ENCODE measurements at regions of chr1 and their contacts with region 1.

Region 1: GRCh38 chr1:202998836-202999750 is 8.1 kb upstream of the TMEM183A start:
- DNase-seq: peak; percentile 85
- ATAC-seq: peak; percentile 49
- H3K4me3 Mint-ChIP-seq: peak overlapping the region; percentile 49
- H3K27ac Mint-ChIP-seq: no peak overlapping the region
- H3K4me1 Mint-ChIP-seq: peaks cover 8% of the 10 kb centered on the region
- H3K27me3 Mint-ChIP-seq: peaks cover 25% of the 10 kb centered on the region
- CTCF ChIP-seq: peak; percentile 86

Region 2: DNA sequence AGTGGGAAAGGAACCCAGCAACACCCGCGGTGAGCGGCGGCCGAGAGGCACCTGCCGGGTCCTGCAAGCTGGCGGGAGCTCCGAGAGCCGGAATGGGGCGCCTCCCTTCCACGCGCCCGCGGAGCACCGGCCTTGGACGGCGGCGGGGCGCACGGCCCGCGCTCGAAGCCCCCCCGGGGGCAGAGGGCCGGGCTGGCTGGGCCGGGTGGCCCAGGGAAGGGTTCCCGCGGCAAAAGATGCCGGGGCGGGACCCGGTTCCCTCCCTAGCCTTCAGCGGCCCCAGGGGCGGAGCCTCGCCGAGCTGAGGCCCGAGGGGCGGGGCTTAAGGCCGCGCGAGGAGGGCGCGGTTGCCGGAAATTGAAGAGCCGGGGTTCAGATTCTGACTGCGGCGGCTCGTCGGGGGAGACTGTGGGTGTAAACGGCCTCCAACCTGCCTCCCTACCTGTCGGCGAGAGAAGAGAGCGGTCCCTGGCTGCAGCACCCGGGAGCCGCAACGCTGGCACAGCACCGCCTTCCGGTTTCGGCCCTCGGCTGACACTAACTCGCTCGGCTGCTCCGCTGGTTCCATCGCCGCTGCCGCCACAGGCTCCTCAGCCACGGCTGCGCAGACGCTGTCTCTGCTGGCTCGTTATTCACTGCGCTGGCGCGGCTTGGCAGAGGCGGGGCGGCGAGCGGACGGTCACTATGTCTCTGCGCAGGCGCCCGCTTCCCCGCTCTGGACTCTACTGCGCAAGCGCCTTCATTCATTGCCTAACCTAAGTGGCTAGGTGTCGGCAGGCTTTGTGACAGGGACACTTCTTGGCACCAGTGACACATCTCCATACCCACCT is 110.3 kb before region 1 on chr1 and contains the start of gene RABIF:
- CTCF ChIA-PET with region 1: interaction called, 6 read pairs
- POLR2A ChIA-PET with region 1: no interaction called
- intact Hi-C with region 1: loop called (anchors 10 kb)
- DNase-seq: peak; percentile 98
- ATAC-seq: peak; percentile 94
- H3K4me3 Mint-ChIP-seq: peak within 1 kb of the TSS; percentile 86
- H3K27ac Mint-ChIP-seq: peak within 1 kb of the TSS; percentile 93
- H3K4me1 Mint-ChIP-seq: peaks cover 20% of the 10 kb centered on the region
- H3K27me3 Mint-ChIP-seq: no peaks in the 10 kb centered on the region
- CTCF ChIP-seq: no peak
- total RNA-seq, gene RABIF: 7.0 to 7.1 TPM

Region 3: DNA sequence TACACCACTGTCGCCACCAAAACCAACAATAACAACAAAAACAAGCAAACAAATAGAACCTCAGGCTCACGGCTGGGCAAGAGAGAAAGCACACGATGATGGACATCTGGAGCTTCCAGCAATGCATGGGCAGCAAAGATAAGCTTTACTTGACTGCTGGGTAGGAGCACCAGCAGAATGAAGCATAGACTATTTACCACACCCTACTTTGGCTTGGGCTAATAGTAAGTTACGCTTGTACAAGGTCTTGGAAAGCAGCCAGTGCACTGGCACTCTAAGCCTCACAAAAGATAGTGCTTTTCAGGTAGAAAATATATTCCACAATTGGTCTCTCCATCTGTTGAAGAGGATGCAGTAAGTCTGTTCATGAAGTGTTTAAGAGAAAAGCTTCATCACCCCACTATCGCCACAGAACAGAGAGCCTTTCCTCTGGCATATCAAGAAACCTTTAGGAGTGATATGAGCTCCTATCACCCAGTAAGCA is 54.6 kb before region 1 on chr1:
- CTCF ChIA-PET with region 1: interaction called, 19 read pairs
- POLR2A ChIA-PET with region 1: no interaction called
- intact Hi-C with region 1: no loop called
- DNase-seq: no peak
- ATAC-seq: no peak
- H3K4me3 Mint-ChIP-seq: no peak overlapping the region
- H3K27ac Mint-ChIP-seq: no peak overlapping the region
- H3K4me1 Mint-ChIP-seq: no peaks in the 10 kb centered on the region
- H3K27me3 Mint-ChIP-seq: no peaks in the 10 kb centered on the region
- CTCF ChIP-seq: no peak

Region 4: GRCh38 chr1:202968840-202969295 is 30.2 kb before region 1 on chr1:
- CTCF ChIA-PET with region 1: interaction called, 23 read pairs
- POLR2A ChIA-PET with region 1: interaction called, 3 read pairs
- intact Hi-C with region 1: no loop called
- DNase-seq: peak; percentile 56
- ATAC-seq: peak; percentile 56
- H3K4me3 Mint-ChIP-seq: no peak overlapping the region
- H3K27ac Mint-ChIP-seq: peak overlapping the region; percentile 8
- H3K4me1 Mint-ChIP-seq: peaks cover 27% of the 10 kb centered on the region
- H3K27me3 Mint-ChIP-seq: no peaks in the 10 kb centered on the region
- CTCF ChIP-seq: peak; percentile 49

Region 5: DNA sequence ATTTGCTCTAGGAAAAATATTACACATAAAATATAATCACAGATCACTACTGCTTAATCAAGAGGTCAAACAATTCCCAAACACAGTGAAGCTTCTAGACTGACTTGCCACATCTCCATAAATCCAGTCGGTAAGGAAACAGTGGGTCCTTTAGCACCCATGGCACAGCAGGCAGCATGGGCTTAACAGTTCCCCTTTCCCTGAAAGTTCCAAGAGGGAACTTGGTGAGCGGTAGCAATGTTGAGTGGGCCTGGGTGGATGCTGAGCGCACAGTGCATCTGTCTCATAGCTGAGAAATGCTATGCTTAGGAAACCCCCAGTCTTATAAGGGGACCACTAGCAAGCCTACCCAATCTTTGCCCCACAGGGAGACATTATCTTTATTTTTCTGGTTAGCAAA is 24.2 kb before region 1 on chr1:
- CTCF ChIA-PET with region 1: interaction called, 23 read pairs
- POLR2A ChIA-PET with region 1: interaction called, 3 read pairs
- intact Hi-C with region 1: no loop called
- DNase-seq: no peak
- ATAC-seq: no peak
- H3K4me3 Mint-ChIP-seq: no peak overlapping the region
- H3K27ac Mint-ChIP-seq: no peak overlapping the region
- H3K4me1 Mint-ChIP-seq: no peaks in the 10 kb centered on the region
- H3K27me3 Mint-ChIP-seq: peaks cover 18% of the 10 kb centered on the region
- CTCF ChIP-seq: no peak

Region 6: DNA sequence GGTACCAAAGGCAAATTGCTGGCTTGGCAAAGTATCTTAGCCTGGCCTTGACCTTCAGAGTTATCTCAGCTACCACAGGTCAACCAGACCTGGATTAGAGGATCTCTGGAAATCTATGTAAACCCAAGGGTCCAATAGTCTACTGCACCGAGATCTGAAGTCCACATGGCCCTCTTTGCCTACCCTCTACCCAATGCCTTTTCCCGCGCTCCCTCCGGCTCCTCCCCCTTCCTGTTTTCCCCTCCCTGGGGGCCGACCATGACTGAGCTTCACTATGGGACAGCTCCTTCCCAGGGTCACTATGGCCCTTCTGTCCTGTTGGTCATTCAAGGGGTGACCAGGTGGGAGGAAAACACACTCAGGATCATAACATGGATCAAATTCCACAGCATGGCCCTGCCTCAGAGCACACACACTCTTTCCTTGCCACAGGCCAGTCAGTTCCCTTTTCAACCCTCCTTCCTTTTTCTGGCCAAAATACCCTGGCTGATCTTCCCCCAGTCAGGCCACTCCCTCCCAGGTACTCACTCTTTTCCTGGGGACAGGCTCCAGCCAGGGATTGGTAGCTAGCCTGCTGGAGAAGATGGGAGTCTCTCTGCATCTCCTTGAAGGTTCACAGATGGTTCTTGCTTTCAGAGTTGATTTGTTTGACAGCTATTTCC is 11.0 kb before region 1 on chr1:
- CTCF ChIA-PET with region 1: interaction called, 44 read pairs
- POLR2A ChIA-PET with region 1: no interaction called
- intact Hi-C with region 1: no loop called
- DNase-seq: no peak
- ATAC-seq: no peak
- H3K4me3 Mint-ChIP-seq: no peak overlapping the region
- H3K27ac Mint-ChIP-seq: no peak overlapping the region
- H3K4me1 Mint-ChIP-seq: no peaks in the 10 kb centered on the region
- H3K27me3 Mint-ChIP-seq: peaks cover 8% of the 10 kb centered on the region
- CTCF ChIP-seq: no peak

Region 7: DNA sequence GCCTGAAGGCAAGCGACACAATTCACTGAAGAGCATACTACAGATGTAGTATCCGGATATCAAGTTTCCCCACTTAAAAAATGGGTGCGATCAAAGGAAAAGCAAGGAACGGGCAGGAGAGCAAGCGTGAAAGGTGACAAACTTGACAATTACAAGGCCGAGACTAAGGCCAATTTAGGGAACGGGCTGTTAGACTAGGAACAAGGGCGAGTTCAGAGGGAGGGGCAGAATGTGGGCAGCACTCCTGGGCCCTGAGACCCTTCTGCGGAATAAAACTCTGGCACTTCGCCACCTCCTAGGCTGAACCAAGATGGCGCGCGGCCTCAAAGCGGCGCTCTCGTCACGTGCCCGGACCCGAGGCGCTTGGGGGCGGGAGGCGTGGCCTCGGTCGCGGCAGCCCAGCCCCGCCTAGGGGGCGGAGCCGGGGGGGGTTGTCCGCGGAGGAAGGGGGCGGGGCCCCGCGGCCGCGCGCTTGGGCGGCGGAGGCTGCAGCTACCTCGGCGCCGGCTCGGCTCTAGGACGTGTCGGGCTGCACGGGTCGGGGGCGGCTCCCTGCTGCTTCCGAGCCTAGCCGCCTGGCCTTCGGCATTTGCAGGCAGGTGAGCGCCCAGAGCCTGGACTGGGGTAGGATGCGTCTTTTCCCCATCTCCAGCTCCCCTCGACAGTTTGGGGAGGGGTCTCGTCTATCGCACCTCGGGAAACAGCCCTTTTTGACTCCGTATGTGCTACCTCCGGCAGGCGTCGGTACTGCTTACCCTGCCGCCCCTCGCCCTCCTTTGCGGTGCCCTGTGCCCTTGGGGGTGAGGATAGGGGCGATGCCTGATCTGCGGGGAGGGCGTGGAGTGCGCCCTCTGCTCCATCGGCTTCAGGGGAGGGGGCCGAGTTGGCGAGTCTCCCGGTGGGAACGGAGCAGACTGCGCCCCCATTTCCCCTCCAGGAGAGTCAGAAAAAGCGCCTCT is 27.2 kb after region 1 on chr1 and contains the start of gene PPFIA4:
- CTCF ChIA-PET with region 1: interaction called, 12 read pairs
- POLR2A ChIA-PET with region 1: interaction called, 4 read pairs
- intact Hi-C with region 1: no loop called
- DNase-seq: peak; percentile 92
- ATAC-seq: peak; percentile 97
- H3K4me3 Mint-ChIP-seq: peak within 1 kb of the TSS; percentile 89
- H3K27ac Mint-ChIP-seq: peak within 1 kb of the TSS; percentile 82
- H3K4me1 Mint-ChIP-seq: peaks cover 17% of the 10 kb centered on the region
- H3K27me3 Mint-ChIP-seq: peaks cover 10% of the 10 kb centered on the region
- CTCF ChIP-seq: no peak
- total RNA-seq, gene PPFIA4: 78.8 to 79.9 TPM

Measured in activated CD8-positive, alpha-beta T cell treated with anti-CD3 and anti-CD28 coated beads for 36 hours (primary cell).